Right lobe of liver (tissue), 6 donors: ENCODE measurements at regions of chr12 and their contacts with region 1.

Region 1: DNA sequence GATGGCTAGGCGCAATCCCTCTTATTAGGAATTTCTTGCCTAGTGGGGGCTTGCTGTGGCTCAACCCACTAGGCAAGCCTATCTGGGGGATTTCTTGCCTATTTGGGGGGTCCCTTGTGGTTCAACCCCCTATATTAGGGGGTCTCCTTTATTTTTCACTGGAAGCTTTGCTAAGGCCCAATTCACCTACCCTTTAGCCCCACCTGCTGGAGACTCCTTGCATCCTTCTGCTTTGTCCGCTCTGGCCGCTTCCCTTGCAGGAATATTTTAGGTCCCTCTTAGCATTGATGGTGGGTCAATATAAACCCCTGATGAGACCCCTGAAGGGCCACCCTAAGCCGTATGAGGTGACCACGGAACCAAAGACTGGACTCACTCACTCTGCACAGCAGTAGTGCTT is 1552.1 kb downstream of the AACS start:
- DNase-seq: no peak
- ATAC-seq: peak; percentile 50 to 82 (median 56)
- H3K4me3 ChIP-seq: no peak overlapping the region
- H3K27ac ChIP-seq: no peak overlapping the region
- H3K4me1 ChIP-seq: no peaks in the 10 kb centered on the region
- H3K27me3 ChIP-seq: no peaks in the 10 kb centered on the region
- CTCF ChIP-seq: peak; percentile 54 to 72 (median 60)
- POLR2A ChIP-seq: no peak

Region 2: GRCh38 chr12:126069549-126070165 is 547.7 kb before region 1 on chr12:
- intact Hi-C with region 1: loop called in 1 of 2 experiments (anchors 10 kb)
- DNase-seq: peak in 2 of 3 donors; percentile 44 to 54
- ATAC-seq: peak; percentile 69 to 89 (median 78)
- H3K4me3 ChIP-seq: no peak overlapping the region
- H3K27ac ChIP-seq: no peak overlapping the region
- H3K4me1 ChIP-seq: peaks cover 0 to 4% (median 0%) of the 10 kb centered on the region in 4 donors
- H3K27me3 ChIP-seq: no peaks in the 10 kb centered on the region
- CTCF ChIP-seq: peak; percentile 62 to 81 (median 74)
- POLR2A ChIP-seq: no peak